HepG2 (cell line): ENCODE measurements at regions of chr14 and their contacts with region 1.

Region 1: DNA sequence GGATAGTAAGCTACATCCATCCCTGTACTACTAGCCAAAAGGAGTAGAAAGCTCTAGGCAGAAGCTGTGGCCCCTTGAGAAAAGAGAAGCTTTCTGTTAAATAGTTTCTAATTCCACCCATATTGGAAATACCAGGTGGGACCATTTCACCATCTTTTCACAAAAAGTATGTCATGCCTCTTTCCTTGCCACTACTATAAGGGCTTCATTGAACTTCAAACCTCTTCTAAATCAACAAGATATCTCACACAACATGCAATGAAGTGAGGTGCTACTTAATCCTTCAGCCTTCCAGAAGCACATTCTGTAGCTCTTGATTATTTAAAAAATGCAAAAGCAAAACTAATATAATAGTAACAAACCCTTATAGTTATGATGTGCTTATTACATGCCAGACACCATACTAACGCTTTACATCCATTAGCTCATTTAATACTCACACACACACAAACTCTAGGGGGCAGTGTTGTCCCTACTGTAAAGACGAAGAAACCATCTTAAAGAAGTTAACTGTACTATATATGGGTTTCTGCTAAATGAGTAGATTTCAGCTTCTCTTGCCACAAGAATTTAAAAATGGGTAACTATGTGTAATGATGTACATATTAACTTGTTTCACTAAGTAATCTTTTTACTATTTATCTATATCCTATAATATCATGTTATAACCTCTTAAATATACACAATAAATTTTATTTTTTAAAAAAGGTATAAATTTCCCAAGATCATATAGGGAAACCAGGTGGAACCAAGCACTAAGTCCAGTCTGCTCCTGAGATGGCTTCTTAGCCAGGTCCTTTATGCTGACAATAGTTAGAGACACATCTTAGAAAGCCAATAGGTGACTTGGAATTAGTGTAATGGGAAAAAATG is 124.4 kb downstream of the RPS29 start:
- DNase-seq: peak; percentile 69
- ATAC-seq: peak; percentile 83
- H3K4me3 ChIP-seq: no peak overlapping the region
- H3K27ac ChIP-seq: no peak overlapping the region
- H3K4me1 ChIP-seq: no peaks in the 10 kb centered on the region
- H3K27me3 ChIP-seq: no peaks in the 10 kb centered on the region
- CTCF ChIP-seq: peak; percentile 74
- EP300 ChIP-seq: no peak
- POLR2A ChIP-seq: no peak
- RAD21 ChIP-seq: no peak

Region 2: GRCh38 chr14:49405291-49405690 is 56.5 kb before region 1 on chr14:
- CTCF ChIA-PET with region 1: no interaction called
- POLR2A ChIA-PET with region 1: no interaction called
- in situ Hi-C with region 1: no loop called
- intact Hi-C with region 1: no loop called
- DNase-seq: no peak
- ATAC-seq: no peak
- H3K4me3 ChIP-seq: no peak overlapping the region
- H3K27ac ChIP-seq: no peak overlapping the region
- H3K4me1 ChIP-seq: no peaks in the 10 kb centered on the region
- H3K27me3 ChIP-seq: no peaks in the 10 kb centered on the region
- CTCF ChIP-seq: no peak
- EP300 ChIP-seq: no peak
- POLR2A ChIP-seq: no peak
- RAD21 ChIP-seq: no peak

Region 3: GRCh38 chr14:49427117-49427516 is 34.6 kb before region 1 on chr14:
- CTCF ChIA-PET with region 1: no interaction called
- POLR2A ChIA-PET with region 1: no interaction called
- in situ Hi-C with region 1: no loop called
- intact Hi-C with region 1: no loop called
- DNase-seq: no peak
- ATAC-seq: no peak
- H3K4me3 ChIP-seq: no peak overlapping the region
- H3K27ac ChIP-seq: no peak overlapping the region
- H3K4me1 ChIP-seq: no peaks in the 10 kb centered on the region
- H3K27me3 ChIP-seq: no peaks in the 10 kb centered on the region
- CTCF ChIP-seq: no peak
- EP300 ChIP-seq: no peak
- POLR2A ChIP-seq: no peak
- RAD21 ChIP-seq: no peak

Region 4: GRCh38 chr14:49497725-49498348 is 36.1 kb after region 1 on chr14:
- CTCF ChIA-PET with region 1: interaction called, 43 read pairs
- POLR2A ChIA-PET with region 1: no interaction called
- in situ Hi-C with region 1: no loop called
- intact Hi-C with region 1: loop called (anchors 1 kb)
- DNase-seq: peak; percentile 70
- ATAC-seq: peak; percentile 75
- H3K4me3 ChIP-seq: no peak overlapping the region
- H3K27ac ChIP-seq: no peak overlapping the region
- H3K4me1 ChIP-seq: no peaks in the 10 kb centered on the region
- H3K27me3 ChIP-seq: peaks cover 0 to 17% of the 10 kb centered on the region in 2 experiments; a peak in 3 of 5 replicates
- CTCF ChIP-seq: peak; percentile 84
- EP300 ChIP-seq: no peak
- POLR2A ChIP-seq: no peak
- RAD21 ChIP-seq: peak; percentile 35; the same call in 1 of the 2 replicates

Region 5: DNA sequence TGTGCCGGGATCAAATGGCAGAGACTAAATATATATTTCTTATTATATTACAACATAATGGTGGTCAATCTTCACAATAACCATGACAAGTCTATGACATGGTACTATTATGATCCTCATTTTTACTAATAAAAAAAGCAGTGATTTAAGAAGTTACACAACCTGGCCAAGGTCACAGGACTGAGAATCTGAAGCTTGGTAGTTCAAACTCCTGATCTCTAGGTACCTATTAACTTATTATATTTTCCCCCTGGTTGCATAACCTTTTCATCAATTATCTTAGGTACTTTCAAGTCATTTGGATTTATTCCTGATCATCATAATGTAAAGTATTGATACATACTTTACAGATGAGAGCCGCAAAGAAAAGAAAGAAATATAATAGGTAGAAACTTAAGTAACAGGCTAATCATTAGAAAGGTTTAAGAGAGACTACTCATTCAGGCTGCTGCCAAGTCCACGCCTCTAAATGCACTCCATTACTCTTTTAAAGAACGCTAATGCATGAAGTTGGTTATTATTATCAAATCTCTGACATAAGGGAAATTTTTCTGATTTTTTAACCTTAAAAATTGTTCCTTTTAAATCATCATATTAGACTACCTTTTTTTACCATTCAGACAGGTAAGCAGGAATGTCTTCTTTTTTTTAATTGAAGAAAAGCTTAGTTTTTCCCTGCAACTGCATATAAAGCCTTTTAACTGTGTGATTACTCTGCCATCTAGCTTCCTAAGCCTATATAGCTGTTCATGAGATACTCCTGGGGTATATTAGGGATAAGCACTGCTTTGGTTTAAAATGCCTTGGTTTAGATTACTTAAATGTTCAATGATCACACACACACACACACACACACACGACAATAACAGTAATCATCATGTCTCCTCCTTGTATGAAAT is 88.8 kb after region 1 on chr14:
- CTCF ChIA-PET with region 1: no interaction called
- POLR2A ChIA-PET with region 1: no interaction called
- in situ Hi-C with region 1: no loop called
- intact Hi-C with region 1: loop called (anchors 5 kb)
- DNase-seq: peak; percentile 12
- ATAC-seq: peak; percentile 58
- H3K4me3 ChIP-seq: no peak overlapping the region
- H3K27ac ChIP-seq: no peak overlapping the region
- H3K4me1 ChIP-seq: peaks cover 35% of the 10 kb centered on the region
- H3K27me3 ChIP-seq: no peaks in the 10 kb centered on the region
- CTCF ChIP-seq: peak; percentile 45
- EP300 ChIP-seq: no peak
- POLR2A ChIP-seq: no peak
- RAD21 ChIP-seq: no peak